Vagina (tissue), 2 donors: ENCODE measurements at regions of chrX and their contacts with region 1.

Region 1: GRCh38 chrX:107861056-107861455 is 35.4 kb downstream of the MID2 start:
- DNase-seq: no peak
- H3K4me3 ChIP-seq: no peak overlapping the region
- H3K27ac ChIP-seq: no peak overlapping the region
- H3K4me1 ChIP-seq: no peaks in the 10 kb centered on the region
- H3K27me3 ChIP-seq: no peaks in the 10 kb centered on the region
- CTCF ChIP-seq: no peak
- POLR2A ChIP-seq: no peak

Region 2: GRCh38 chrX:106100442-106100841 is 1760.6 kb before region 1 on chrX:
- intact Hi-C with region 1: loop called (anchors 5 kb)
- DNase-seq: no peak
- H3K4me3 ChIP-seq: no peak overlapping the region
- H3K27ac ChIP-seq: no peak overlapping the region
- H3K4me1 ChIP-seq: no peaks in the 10 kb centered on the region
- H3K27me3 ChIP-seq: no peaks in the 10 kb centered on the region
- CTCF ChIP-seq: no peak
- POLR2A ChIP-seq: no peak

Region 3: GRCh38 chrX:107654872-107655761 is 205.9 kb before region 1 on chrX:
- intact Hi-C with region 1: no loop called
- DNase-seq: no peak
- H3K4me3 ChIP-seq: no peak overlapping the region
- H3K27ac ChIP-seq: peak overlapping the region; percentile 42
- H3K4me1 ChIP-seq: no peaks in the 10 kb centered on the region
- H3K27me3 ChIP-seq: no peaks in the 10 kb centered on the region
- CTCF ChIP-seq: peak in 1 of 3 experiments; percentile 57
- POLR2A ChIP-seq: no peak